ENCODE measurements at regions of chr14 and their contacts with region 1.

Region 1: DNA sequence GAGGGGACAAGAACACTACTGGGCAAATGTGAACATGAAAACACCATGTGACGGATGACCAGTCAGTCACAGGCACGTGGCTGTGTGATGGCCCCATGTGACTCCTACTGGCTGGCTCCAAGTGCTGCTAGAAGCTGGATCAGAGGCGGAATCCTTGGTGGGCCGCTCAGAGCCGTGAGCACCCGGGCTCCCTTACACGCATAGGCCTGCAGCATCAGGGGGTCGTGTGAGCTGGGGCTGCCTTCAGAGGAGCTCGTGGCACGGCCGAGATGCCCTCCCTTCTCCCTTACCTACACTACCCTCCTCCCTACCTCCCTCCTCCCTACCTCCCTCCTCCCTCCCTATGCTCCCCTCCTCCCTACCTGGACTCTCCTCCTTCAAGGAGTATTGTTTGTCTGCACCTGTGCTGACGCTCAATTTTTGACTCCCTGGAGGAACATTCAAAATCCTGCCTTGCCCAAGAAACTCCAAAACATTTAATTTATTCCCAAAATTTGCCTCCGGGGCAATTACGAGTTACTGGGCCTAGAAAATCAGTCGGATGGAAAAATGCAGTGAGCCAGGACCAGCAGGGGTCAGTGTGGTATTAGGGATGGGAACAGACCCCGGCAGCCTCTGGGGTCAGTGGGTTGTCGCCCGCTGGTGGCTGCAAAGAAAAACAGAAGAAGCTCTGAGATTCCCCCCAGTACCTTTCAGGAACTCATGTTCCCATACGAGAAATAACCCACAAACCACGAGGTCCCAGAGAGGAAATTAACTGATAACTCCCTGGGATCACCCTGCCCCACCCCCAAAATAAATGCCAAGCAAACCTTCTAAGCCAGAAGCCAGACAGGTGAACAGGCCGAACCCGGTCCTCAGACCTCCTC is 61.2 kb downstream of the C14orf132 start:
- DNase-seq: peak; percentile 82 to 90
- H3K4me3 ChIP-seq: no peak overlapping the region
- H3K4me3 Mint-ChIP-seq: no peak overlapping the region
- H3K27ac Mint-ChIP-seq: no peak overlapping the region
- H3K4me1 ChIP-seq: peaks cover 43% of the 10 kb centered on the region
- H3K4me1 Mint-ChIP-seq: peaks cover 8% of the 10 kb centered on the region
- H3K27me3 ChIP-seq: no peaks in the 10 kb centered on the region
- H3K27me3 Mint-ChIP-seq: no peaks in the 10 kb centered on the region
- CTCF ChIP-seq: peak; percentile 95 to 96

Region 2: GRCh38 chr14:95979339-95980042 is 120.9 kb before region 1 on chr14:
- CTCF ChIA-PET with region 1: no interaction called
- POLR2A ChIA-PET with region 1: no interaction called
- intact Hi-C with region 1: no loop called
- DNase-seq: no peak
- H3K4me3 ChIP-seq: no peak overlapping the region
- H3K4me3 Mint-ChIP-seq: no peak overlapping the region
- H3K27ac Mint-ChIP-seq: no peak overlapping the region
- H3K4me1 ChIP-seq: no peaks in the 10 kb centered on the region
- H3K4me1 Mint-ChIP-seq: peaks cover 5% of the 10 kb centered on the region
- H3K27me3 ChIP-seq: no peaks in the 10 kb centered on the region; the same call in 1 of the 2 replicates
- H3K27me3 Mint-ChIP-seq: peaks cover 14% of the 10 kb centered on the region
- CTCF ChIP-seq: peak in 1 of 2 experiments; percentile 18

Region 3: GRCh38 chr14:95993768-95994592 is 106.4 kb before region 1 on chr14:
- CTCF ChIA-PET with region 1: interaction called, 15 read pairs
- POLR2A ChIA-PET with region 1: interaction called, 3 read pairs
- intact Hi-C with region 1: loop called (anchors 1 kb)
- DNase-seq: peak in 1 of 2 experiments; percentile 25
- H3K4me3 ChIP-seq: no peak overlapping the region
- H3K4me3 Mint-ChIP-seq: no peak overlapping the region
- H3K27ac Mint-ChIP-seq: no peak overlapping the region
- H3K4me1 ChIP-seq: no peaks in the 10 kb centered on the region
- H3K4me1 Mint-ChIP-seq: no peaks in the 10 kb centered on the region
- H3K27me3 ChIP-seq: no peaks in the 10 kb centered on the region
- H3K27me3 Mint-ChIP-seq: peaks cover 3% of the 10 kb centered on the region
- CTCF ChIP-seq: peak; percentile 76 to 79

Region 4: DNA sequence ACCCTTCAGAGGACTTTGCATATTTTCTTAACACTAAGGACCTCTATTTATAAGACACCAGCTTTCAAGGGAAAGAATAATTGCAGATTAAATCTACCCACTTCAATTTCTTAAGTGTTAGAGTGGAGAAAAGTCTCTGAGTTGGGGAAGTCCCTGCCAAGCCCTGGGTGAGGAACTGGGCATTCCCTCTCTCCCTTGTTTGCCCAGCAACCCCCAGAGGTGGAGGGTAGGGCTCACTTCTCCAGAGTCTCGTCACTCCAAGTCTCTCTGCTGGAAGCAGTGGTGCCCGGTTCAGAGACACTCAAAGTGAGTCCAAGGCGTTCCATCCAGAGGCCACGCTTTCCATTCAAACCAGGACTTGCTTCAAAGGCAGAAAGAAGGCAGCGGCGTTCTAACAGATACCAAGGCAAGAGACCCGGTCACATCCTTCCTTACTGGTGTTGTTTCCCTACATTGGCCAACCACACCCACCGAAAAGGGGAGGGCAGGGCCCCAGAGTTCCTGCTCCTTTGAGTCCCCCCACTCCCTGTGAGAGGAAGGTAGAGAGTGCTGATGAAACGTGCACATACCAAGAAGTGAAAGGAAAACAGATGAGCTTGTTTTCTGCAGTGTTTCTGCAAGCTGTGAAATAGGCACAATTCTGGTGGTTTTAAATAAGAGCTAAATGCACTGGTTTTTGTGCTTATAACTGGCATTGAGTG is 98.2 kb after region 1 on chr14:
- CTCF ChIA-PET with region 1: interaction called, 12 read pairs
- POLR2A ChIA-PET with region 1: interaction called, 5 read pairs
- intact Hi-C with region 1: no loop called
- DNase-seq: peak in 1 of 2 experiments; percentile 8
- H3K4me3 ChIP-seq: no peak overlapping the region
- H3K4me3 Mint-ChIP-seq: no peak overlapping the region
- H3K27ac Mint-ChIP-seq: no peak overlapping the region
- H3K4me1 ChIP-seq: peaks cover 32% of the 10 kb centered on the region
- H3K4me1 Mint-ChIP-seq: peaks cover 28% of the 10 kb centered on the region
- H3K27me3 ChIP-seq: no peaks in the 10 kb centered on the region
- H3K27me3 Mint-ChIP-seq: no peaks in the 10 kb centered on the region
- CTCF ChIP-seq: no peak

Region 5: GRCh38 chr14:96261772-96262655 is 161.6 kb after region 1 on chr14:
- CTCF ChIA-PET with region 1: interaction called, 12 read pairs
- POLR2A ChIA-PET with region 1: no interaction called
- intact Hi-C with region 1: loop called (anchors 1 kb)
- DNase-seq: no peak
- H3K4me3 ChIP-seq: no peak overlapping the region
- H3K4me3 Mint-ChIP-seq: no peak overlapping the region
- H3K27ac Mint-ChIP-seq: no peak overlapping the region
- H3K4me1 ChIP-seq: 0 out of 2 replicates have a peak, but pooled peaks cover 6% of the 10 kb centered on the region
- H3K4me1 Mint-ChIP-seq: peaks cover 15% of the 10 kb centered on the region
- H3K27me3 ChIP-seq: no peaks in the 10 kb centered on the region
- H3K27me3 Mint-ChIP-seq: no peaks in the 10 kb centered on the region
- CTCF ChIP-seq: peak in 1 of 2 experiments; percentile 20

Region 6: DNA sequence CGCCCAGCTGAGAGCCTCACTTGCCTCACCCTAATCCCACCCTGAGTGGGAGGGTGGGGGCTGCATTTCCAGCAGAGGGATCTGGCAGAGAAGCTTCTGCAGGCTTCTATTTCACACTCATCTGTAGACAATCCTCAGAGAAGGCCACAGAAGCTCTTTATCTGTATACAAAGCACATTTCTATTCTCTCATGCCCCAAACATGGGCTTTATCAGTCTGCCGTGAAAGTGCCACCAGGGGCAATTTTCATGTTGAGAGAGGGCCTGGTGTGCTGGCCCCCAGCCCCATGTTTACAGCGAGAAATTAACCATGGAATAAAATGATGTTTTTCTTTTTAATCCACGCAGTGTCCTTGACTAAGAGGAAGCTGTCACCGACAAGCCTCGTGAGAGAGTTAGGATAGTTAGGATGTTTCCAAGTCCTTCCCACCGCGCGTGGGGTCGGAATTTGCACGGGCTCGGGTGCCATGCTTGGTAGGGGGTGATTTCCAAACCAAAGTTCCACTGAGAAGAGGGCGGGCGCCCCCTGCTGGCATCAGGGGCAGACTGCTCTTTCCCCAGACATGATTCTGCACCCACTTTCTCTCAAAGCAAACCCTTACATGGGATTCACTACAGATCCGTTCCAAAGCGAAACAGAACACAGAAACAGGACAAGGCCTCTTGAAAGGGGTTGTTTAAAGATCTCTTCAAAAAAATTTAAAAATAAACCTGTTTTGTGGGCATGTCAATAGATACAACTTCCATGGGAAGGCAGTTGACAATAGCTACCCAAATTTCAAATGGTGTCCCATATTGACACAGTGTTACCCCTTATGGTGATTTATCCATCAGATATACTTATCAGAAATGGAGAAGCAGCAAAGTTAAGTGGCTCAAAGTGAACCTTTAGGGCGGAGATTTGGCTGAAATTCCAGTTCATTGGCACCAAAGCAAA is 175.1 kb after region 1 on chr14:
- CTCF ChIA-PET with region 1: interaction called, 60 read pairs
- POLR2A ChIA-PET with region 1: no interaction called
- intact Hi-C with region 1: loop called (anchors 1 kb)
- DNase-seq: peak; percentile 64 to 83
- H3K4me3 ChIP-seq: no peak overlapping the region
- H3K4me3 Mint-ChIP-seq: peak overlapping the region; percentile 11
- H3K27ac Mint-ChIP-seq: no peak overlapping the region
- H3K4me1 ChIP-seq: peaks cover 12% of the 10 kb centered on the region
- H3K4me1 Mint-ChIP-seq: peaks cover 12% of the 10 kb centered on the region
- H3K27me3 ChIP-seq: no peaks in the 10 kb centered on the region
- H3K27me3 Mint-ChIP-seq: no peaks in the 10 kb centered on the region
- CTCF ChIP-seq: peak; percentile 91 to 96